GM12878 (cell line): ENCODE measurements at regions of chr1 and their contacts with region 1.

Region 1: DNA sequence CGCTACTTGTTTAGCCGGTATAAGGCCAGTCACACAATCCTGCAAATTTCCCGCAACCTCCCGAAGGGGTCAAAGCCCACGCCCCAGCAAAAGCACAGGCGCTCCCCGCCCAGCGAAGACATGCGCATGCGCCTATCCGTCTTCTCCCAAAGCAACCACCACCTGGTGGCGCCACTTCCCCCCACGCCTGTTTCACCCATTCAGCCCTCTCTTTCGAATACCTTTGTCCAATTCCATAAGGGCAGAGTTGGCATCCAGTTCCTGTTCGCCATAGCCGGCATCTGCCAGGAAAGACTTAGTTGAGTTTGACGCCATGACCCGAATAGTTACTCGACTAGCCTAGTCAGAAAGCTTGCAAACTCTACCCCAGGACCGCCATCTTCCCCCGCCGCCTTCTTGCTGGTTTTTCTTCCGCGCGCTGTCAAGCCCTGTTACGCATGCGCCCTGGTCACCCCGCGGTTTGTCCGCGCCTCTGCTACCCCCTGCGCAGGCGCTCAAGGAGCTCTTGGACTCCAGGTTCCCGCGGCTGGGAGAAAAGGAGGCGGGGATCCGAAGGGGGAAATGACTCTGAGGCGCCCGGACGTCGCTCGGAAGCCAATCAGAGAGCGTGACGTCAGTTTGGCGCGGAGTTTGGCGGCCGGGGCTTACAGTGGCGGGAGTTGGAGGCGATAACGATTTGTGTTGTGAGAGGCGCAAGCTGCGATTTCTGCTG is at the starts of genes DTL and INTS7:
- DNase-seq: peak; percentile 96
- ATAC-seq: peak; percentile 77
- H3K4me3 ChIP-seq: peak within 1 kb of the TSS; percentile 90
- H3K27ac ChIP-seq: peak within 1 kb of the TSS; percentile 98
- H3K4me1 ChIP-seq: peaks cover 17% of the 10 kb centered on the region
- H3K27me3 ChIP-seq: no peaks in the 10 kb centered on the region
- CTCF ChIP-seq: peak; percentile 82 to 97 (median 83)
- EP300 ChIP-seq: no peak
- POLR2A ChIP-seq: peak; percentile 89
- RAD21 ChIP-seq: no peak
- polyA plus RNA-seq, gene DTL: 24.1 to 24.6 TPM
- polyA plus RNA-seq, gene INTS7: 17.1 to 20.1 TPM

Region 2: GRCh38 chr1:211830330-211831142 is 204.7 kb before region 1 on chr1 and contains the start of gene LPGAT1:
- CTCF ChIA-PET with region 1: interaction called, 24 read pairs
- POLR2A ChIA-PET with region 1: interaction called, 3 read pairs
- RAD21 ChIA-PET with region 1: interaction called, 4 read pairs
- SMC1A ChIA-PET with region 1: interaction called, 13 read pairs
- in situ Hi-C with region 1: no loop called
- intact Hi-C with region 1: loop called (anchors 2 kb)
- DNase-seq: no peak
- ATAC-seq: peak; percentile 82
- H3K4me3 ChIP-seq: peak within 1 kb of the TSS; percentile 98
- H3K27ac ChIP-seq: peak within 1 kb of the TSS; percentile 85
- H3K4me1 ChIP-seq: peaks cover 28% of the 10 kb centered on the region
- H3K27me3 ChIP-seq: no peaks in the 10 kb centered on the region
- CTCF ChIP-seq: peak; percentile 50 to 63 (median 53); a peak in 5 of 6 replicates
- EP300 ChIP-seq: no peak
- POLR2A ChIP-seq: peak; percentile 75
- RAD21 ChIP-seq: peak; percentile 25; the same call in 1 of the 2 replicates
- polyA plus RNA-seq, gene LPGAT1: 5.8 to 6.4 TPM

Region 3: GRCh38 chr1:211985556-211986264 is 49.6 kb before region 1 on chr1:
- CTCF ChIA-PET with region 1: interaction called, 17 read pairs
- POLR2A ChIA-PET with region 1: interaction called, 6 read pairs
- RAD21 ChIA-PET with region 1: interaction called, 33 read pairs
- SMC1A ChIA-PET with region 1: interaction called, 24 read pairs
- in situ Hi-C with region 1: no loop called
- intact Hi-C with region 1: no loop called
- DNase-seq: peak; percentile 82
- ATAC-seq: peak; percentile 99
- H3K4me3 ChIP-seq: no peak overlapping the region
- H3K27ac ChIP-seq: peak overlapping the region; percentile 88
- H3K4me1 ChIP-seq: peaks cover 16% of the 10 kb centered on the region
- H3K27me3 ChIP-seq: no peaks in the 10 kb centered on the region
- CTCF ChIP-seq: no peak
- EP300 ChIP-seq: peak in 1 of 2 experiments; percentile 52; a peak in 1 of 4 replicates
- POLR2A ChIP-seq: no peak; the same call in 1 of the 2 replicates
- RAD21 ChIP-seq: no peak

Region 4: GRCh38 chr1:212021563-212021962 is 13.7 kb before region 1 on chr1:
- CTCF ChIA-PET with region 1: interaction called, 68 read pairs
- POLR2A ChIA-PET with region 1: interaction called, 8 read pairs
- RAD21 ChIA-PET with region 1: interaction called, 15 read pairs
- SMC1A ChIA-PET with region 1: interaction called, 37 read pairs
- in situ Hi-C with region 1: no loop called
- intact Hi-C with region 1: no loop called
- DNase-seq: no peak
- ATAC-seq: no peak
- H3K4me3 ChIP-seq: no peak overlapping the region
- H3K27ac ChIP-seq: no peak overlapping the region
- H3K4me1 ChIP-seq: 0 out of 2 replicates have a peak, but pooled peaks cover 4% of the 10 kb centered on the region
- H3K27me3 ChIP-seq: no peaks in the 10 kb centered on the region
- CTCF ChIP-seq: no peak
- EP300 ChIP-seq: no peak
- POLR2A ChIP-seq: no peak
- RAD21 ChIP-seq: no peak

Region 5: GRCh38 chr1:212284744-212285684 is 249.7 kb after region 1 on chr1 and contains the start of gene PPP2R5A:
- CTCF ChIA-PET with region 1: interaction called, 27 read pairs
- POLR2A ChIA-PET with region 1: interaction called, 9 read pairs
- RAD21 ChIA-PET with region 1: interaction called, 9 read pairs
- SMC1A ChIA-PET with region 1: interaction called, 31 read pairs
- in situ Hi-C with region 1: no loop called
- intact Hi-C with region 1: no loop called
- DNase-seq: peak; percentile 97
- ATAC-seq: peak; percentile 94
- H3K4me3 ChIP-seq: peak within 1 kb of the TSS; percentile 88
- H3K27ac ChIP-seq: peak within 1 kb of the TSS; percentile 79
- H3K4me1 ChIP-seq: peaks cover 7% of the 10 kb centered on the region
- H3K27me3 ChIP-seq: no peaks in the 10 kb centered on the region
- CTCF ChIP-seq: peak; percentile 9 to 40 (median 27); a peak in 5 of 6 replicates
- EP300 ChIP-seq: no peak
- POLR2A ChIP-seq: peak; percentile 77
- RAD21 ChIP-seq: no peak
- polyA plus RNA-seq, gene PPP2R5A: 15.4 to 18.2 TPM